Right ventricle myocardium inferior (tissue), 1 donor: ENCODE measurements at regions of chr2 and their contacts with region 1.

Region 1: GRCh38 chr2:75619956-75620740 is 26.4 kb upstream of the MRPL19 start:
- DNase-seq: no peak
- ATAC-seq: no peak

Region 2: GRCh38 chr2:74708883-74709282 is 911.3 kb before region 1 on chr2:
- intact Hi-C with region 1: loop called (anchors 10 kb)
- DNase-seq: no peak
- ATAC-seq: no peak

Region 3: GRCh38 chr2:75698918-75699317 is 78.8 kb after region 1 on chr2:
- intact Hi-C with region 1: no loop called
- DNase-seq: no peak
- ATAC-seq: no peak

Region 4: DNA sequence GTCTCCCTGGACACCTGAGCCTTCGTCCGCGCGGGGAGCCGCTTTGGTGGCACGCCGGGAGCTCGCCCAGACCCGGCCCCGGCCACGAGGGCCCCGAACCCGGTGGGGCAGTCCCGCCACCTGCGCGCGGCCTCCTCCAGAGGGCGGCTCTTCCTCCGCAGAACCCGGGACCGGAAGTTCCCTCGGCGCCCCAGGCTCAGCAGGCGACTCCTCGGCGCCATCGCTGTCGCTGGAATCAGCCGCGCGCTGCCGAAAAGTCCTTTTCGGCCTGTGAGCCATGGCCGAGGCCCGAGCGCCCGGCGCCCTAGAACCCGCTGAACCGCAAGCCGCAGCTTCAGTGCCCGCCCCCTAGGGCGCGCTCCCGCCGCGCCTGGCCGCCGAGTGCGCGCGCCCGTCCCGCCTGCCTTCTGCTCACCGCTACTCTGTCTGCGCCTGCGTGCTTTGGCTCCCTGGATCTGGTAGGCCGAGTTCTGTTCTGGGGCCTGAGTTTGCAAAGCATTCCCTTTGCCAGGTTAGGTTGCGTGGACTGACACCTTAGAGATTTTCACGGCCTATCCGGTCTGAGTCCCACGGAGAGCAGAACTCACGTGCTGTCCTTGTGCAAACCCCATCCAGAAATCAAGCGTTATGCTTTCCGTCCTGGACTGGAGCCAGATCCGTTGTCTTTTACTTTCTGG is 90.6 kb after region 1 on chr2 and contains the start of gene GCFC2:
- intact Hi-C with region 1: no loop called
- DNase-seq: peak; percentile 95
- ATAC-seq: peak; percentile 98
- total RNA-seq, gene GCFC2: 10.5 TPM